Prostate gland (tissue), 2 donors: ENCODE measurements at regions of chr16 and their contacts with region 1.

Region 1: GRCh38 chr16:59886021-59886420 is 1151.9 kb upstream of the GOT2 start:
- DNase-seq: peak; percentile 74
- H3K4me3 ChIP-seq: no peak overlapping the region
- H3K27ac ChIP-seq: no peak overlapping the region
- H3K4me1 ChIP-seq: no peaks in the 10 kb centered on the region
- H3K27me3 ChIP-seq: no peaks in the 10 kb centered on the region
- CTCF ChIP-seq: no peak
- POLR2A ChIP-seq: no peak

Region 2: DNA sequence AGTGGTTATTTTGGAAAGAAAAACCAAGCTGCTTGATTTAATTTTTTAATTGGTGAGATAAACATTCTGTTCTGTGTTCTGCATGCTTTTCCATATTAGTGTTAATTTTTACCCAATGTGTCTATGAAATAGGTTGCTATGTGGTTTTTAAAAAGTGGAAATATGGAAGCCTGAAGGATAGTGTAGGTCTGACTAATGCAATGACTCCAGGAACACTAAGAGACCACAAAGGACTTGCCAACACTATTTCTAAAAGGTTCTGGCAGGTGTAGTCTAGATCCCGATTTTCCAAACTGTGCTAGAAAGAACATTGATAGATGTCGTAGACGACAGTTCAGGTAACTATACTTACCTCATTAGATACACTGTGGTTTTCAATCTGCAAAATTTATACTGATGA is 274.5 kb before region 1 on chr16:
- intact Hi-C with region 1: no loop called
- DNase-seq: no peak
- H3K4me3 ChIP-seq: no peak overlapping the region
- H3K27ac ChIP-seq: no peak overlapping the region
- H3K4me1 ChIP-seq: no peaks in the 10 kb centered on the region
- H3K27me3 ChIP-seq: no peaks in the 10 kb centered on the region
- CTCF ChIP-seq: no peak
- POLR2A ChIP-seq: no peak

Region 3: DNA sequence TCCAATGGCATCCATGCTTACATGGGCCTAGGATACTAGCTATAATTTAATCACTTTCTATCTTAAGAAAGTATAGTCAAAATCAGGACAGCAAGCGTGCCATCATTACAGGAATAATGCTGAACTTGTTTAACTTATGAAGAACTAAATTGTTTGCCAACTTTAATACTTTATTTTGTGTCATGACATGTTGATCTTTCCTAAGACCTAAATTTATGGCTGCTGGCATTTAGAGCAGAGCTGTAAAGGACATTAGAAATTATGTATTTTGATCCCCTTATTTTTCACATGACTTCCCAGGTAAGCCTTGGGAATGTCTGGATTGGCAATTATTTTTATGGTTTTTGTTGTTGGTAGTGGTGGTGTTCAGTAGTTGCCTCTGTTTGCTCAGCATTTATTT is 231.6 kb before region 1 on chr16:
- intact Hi-C with region 1: loop called (anchors 5 kb)
- DNase-seq: no peak
- H3K4me3 ChIP-seq: no peak overlapping the region
- H3K27ac ChIP-seq: no peak overlapping the region
- H3K4me1 ChIP-seq: no peaks in the 10 kb centered on the region
- H3K27me3 ChIP-seq: no peaks in the 10 kb centered on the region
- CTCF ChIP-seq: no peak
- POLR2A ChIP-seq: no peak

Region 4: DNA sequence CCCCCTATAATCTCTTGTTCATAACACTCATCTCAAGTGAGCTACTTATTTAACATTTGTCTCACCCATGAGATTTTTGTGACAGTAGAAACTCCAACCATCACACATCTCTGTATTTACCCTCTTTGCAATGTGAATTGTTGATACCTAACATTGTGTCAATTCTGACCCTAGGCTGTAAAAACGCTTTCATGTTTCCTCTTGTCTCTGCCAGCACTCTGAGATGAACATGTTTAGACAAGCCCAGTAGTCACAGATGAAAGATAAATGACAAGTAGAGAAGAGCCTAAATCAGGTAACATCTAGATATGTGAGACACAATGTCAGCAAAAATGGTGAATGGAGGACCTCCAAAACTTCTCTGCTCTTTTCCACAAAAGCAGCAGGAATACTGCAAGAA is 102.6 kb after region 1 on chr16:
- intact Hi-C with region 1: no loop called
- DNase-seq: no peak
- H3K4me3 ChIP-seq: no peak overlapping the region
- H3K27ac ChIP-seq: no peak overlapping the region
- H3K4me1 ChIP-seq: no peaks in the 10 kb centered on the region
- H3K27me3 ChIP-seq: no peaks in the 10 kb centered on the region
- CTCF ChIP-seq: no peak
- POLR2A ChIP-seq: no peak